T-cell (primary cell): ENCODE measurements at regions of chr16 and their contacts with region 1.

Region 1: GRCh38 chr16:22297114-22297878 is at the start of gene POLR3E:
- DNase-seq: peak; percentile 96 to 100 (median 100)
- ATAC-seq: peak; percentile 75 to 94 (median 91)
- H3K4me3 ChIP-seq: peak within 1 kb of the TSS; percentile 88 to 92
- H3K4me3 Mint-ChIP-seq: peak within 1 kb of the TSS; percentile 94 to 95 (median 94)
- H3K27ac ChIP-seq: peak within 1 kb of the TSS; percentile 96
- H3K27ac Mint-ChIP-seq: peak within 1 kb of the TSS; percentile 94 to 96
- H3K4me1 ChIP-seq: peaks cover 10 to 45% of the 10 kb centered on the region in 2 experiments
- H3K4me1 Mint-ChIP-seq: peaks cover 46 to 49% (median 48%) of the 10 kb centered on the region in 3 donors
- H3K27me3 ChIP-seq: peaks cover 0 to 5% of the 10 kb centered on the region in 2 experiments
- H3K27me3 Mint-ChIP-seq: peaks cover 0 to 4% of the 10 kb centered on the region in 2 donors
- total RNA-seq, gene POLR3E: 79.3 to 174 (median 99.7) TPM

Region 2: GRCh38 chr16:20791923-20792612 is 1505.2 kb before region 1 on chr16:
- CTCF ChIA-PET with region 1: interaction called in 1 of 2 experiments, 11 read pairs
- POLR2A ChIA-PET with region 1: no interaction called
- DNase-seq: no peak
- ATAC-seq: no peak
- H3K4me3 ChIP-seq: no peak overlapping the region
- H3K4me3 Mint-ChIP-seq: no peak overlapping the region
- H3K27ac ChIP-seq: no peak overlapping the region
- H3K27ac Mint-ChIP-seq: no peak overlapping the region
- H3K4me1 ChIP-seq: no peaks in the 10 kb centered on the region
- H3K4me1 Mint-ChIP-seq: no peaks in the 10 kb centered on the region
- H3K27me3 ChIP-seq: no peaks in the 10 kb centered on the region
- H3K27me3 Mint-ChIP-seq: no peaks in the 10 kb centered on the region